ENCODE measurements at regions of chr17 and their contacts with region 1.

Region 1: GRCh38 chr17:27879987-27880608 is 13.1 kb downstream of the LYRM9 start:
- DNase-seq: peak; percentile 84
- ATAC-seq: peak; percentile 95
- H3K4me3 Mint-ChIP-seq: no peak overlapping the region
- H3K27ac Mint-ChIP-seq: no peak overlapping the region
- H3K4me1 Mint-ChIP-seq: peaks cover 19% of the 10 kb centered on the region
- H3K27me3 Mint-ChIP-seq: no peaks in the 10 kb centered on the region
- CTCF ChIP-seq: peak; percentile 73; the same call in 1 of the 2 replicates

Region 2: DNA sequence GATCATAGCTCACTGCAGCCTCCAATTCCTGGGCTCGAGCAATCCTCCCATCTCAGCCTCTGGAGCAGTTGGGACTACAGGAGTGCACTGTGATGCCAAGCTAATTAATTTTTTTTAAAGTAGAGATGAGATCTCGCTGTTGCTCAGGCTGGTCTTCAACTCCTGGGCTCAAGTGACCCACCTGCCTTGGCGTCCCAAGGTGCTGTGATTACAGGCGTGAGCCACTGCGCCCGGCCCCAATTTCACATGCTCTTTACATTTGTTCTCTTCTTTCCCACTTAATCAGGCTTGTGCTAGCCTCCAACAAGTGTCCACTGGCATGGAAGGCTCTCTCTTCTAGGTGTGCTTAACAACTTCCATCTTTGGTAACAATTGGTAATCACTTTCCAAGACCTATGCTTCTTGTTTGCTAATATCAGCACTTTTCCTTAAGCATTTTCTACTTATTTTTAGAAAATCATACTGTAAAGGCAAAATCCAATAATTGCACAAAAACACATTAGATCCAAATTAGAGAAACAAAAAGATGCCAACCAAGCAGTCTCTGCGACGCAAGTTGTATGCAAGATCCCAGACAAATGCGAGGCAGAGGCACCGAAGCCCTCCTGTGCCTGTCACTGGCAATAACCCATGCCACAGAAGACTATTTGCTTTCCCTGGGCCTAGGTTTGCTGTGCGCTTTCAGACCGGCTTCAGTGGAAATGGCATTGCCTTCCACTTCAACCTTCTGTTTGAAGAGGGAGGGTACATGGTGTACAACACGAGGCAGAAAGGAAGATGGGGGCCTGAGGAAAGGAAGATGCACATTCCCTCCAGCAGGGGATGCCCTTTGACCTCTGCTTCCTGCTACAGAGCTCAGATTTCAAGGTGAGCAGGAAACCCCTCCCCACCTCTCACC is 132.4 kb before region 1 on chr17:
- CTCF ChIA-PET with region 1: interaction called, 14 read pairs
- POLR2A ChIA-PET with region 1: no interaction called
- DNase-seq: peak; percentile 78
- ATAC-seq: peak; percentile 92
- H3K4me3 Mint-ChIP-seq: no peak overlapping the region
- H3K27ac Mint-ChIP-seq: no peak overlapping the region
- H3K4me1 Mint-ChIP-seq: peaks cover 4% of the 10 kb centered on the region; the same call in 1 of the 2 replicates
- H3K27me3 Mint-ChIP-seq: no peaks in the 10 kb centered on the region
- CTCF ChIP-seq: peak; percentile 74

Region 3: GRCh38 chr17:27768858-27769410 is 111.2 kb before region 1 on chr17:
- CTCF ChIA-PET with region 1: interaction called, 17 read pairs
- POLR2A ChIA-PET with region 1: no interaction called
- DNase-seq: no peak
- ATAC-seq: no peak
- H3K4me3 Mint-ChIP-seq: no peak overlapping the region
- H3K27ac Mint-ChIP-seq: no peak overlapping the region
- H3K4me1 Mint-ChIP-seq: peaks cover 6% of the 10 kb centered on the region
- H3K27me3 Mint-ChIP-seq: no peaks in the 10 kb centered on the region
- CTCF ChIP-seq: no peak

Region 4: DNA sequence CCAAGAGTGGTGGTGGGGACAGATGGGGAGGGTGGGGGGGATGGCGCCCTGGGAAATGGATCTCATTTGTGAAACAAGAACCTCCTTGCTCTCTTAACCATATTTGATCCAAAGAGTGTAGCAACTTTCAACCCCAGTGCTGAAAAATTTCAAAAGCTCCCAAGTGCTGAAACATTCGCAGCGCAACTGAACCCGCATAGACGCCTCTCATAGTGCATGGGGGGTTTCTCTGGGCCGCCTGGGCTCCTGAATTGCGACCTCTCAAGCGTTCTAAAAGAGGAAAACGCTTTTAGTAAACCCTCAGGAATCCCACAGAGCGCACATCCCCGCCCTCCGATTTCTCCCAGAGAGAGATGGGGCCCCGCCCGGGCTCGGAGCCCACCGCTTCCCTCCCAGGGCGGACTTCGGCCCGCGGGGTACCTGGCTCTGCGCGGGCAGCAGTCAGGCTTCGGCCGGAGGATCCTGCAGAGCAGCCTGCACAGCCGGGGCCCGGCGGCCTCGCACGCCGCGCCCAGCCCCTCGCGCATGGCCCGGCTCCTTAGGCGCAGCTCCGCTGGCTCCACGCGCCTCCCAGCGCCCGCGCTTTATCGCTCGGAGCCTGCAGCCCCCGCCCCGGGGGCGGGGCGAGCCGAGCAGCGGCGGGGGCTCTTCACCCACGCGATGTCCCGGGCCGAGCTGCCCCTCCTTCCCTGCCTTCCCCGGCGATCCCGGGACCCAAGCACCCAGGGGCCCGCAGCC is 86.8 kb before region 1 on chr17:
- CTCF ChIA-PET with region 1: interaction called, 480 read pairs
- POLR2A ChIA-PET with region 1: no interaction called
- DNase-seq: peak; percentile 51
- ATAC-seq: peak; percentile 76
- H3K4me3 Mint-ChIP-seq: peak overlapping the region; percentile 62
- H3K27ac Mint-ChIP-seq: no peak overlapping the region
- H3K4me1 Mint-ChIP-seq: peaks cover 7% of the 10 kb centered on the region
- H3K27me3 Mint-ChIP-seq: peaks cover 35% of the 10 kb centered on the region
- CTCF ChIP-seq: no peak

Region 5: DNA sequence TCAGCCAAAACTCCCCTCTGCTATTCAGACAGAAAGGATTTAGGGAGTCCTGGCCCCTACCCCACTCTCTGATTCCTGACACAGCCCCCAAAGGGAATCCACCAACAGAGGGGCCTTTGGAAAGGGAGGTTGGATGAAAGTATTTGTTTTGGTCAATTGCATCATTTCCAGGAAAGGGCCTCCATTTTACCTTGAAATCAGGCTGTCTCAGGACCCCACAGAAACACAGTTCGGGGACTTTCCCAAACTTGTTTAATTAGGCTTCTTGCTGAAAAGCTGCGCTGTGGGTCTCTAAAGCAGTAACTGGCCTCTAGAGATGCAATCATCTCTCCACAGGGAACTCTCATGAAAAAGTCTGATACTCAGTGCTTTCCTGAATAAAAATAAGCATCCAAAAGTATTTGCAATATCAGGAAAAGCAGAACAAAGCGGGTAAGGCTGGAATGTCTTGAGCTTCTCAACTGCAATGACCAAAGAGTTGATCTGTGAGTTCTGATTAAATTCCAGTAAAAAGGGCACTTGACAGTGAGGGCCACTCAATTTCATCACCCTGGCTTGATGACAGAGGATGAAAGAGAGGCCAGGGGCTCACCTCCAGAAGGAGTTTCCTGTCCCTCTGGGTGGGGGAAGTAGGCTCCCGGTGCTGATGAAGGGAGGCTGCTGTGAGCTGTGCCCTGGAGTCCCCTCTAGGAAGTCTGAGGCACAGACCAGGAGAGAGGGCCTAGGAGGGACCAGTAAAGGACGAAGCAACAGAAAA is 23.2 kb before region 1 on chr17:
- CTCF ChIA-PET with region 1: interaction called, 16 read pairs
- POLR2A ChIA-PET with region 1: no interaction called
- DNase-seq: no peak
- ATAC-seq: no peak; the same call in 1 of the 2 replicates
- H3K4me3 Mint-ChIP-seq: no peak overlapping the region
- H3K27ac Mint-ChIP-seq: no peak overlapping the region
- H3K4me1 Mint-ChIP-seq: peaks cover 7% of the 10 kb centered on the region
- H3K27me3 Mint-ChIP-seq: no peaks in the 10 kb centered on the region
- CTCF ChIP-seq: no peak